ENCODE measurements at regions of chr6 and their contacts with region 1.

Region 1: GRCh38 chr6:26439657-26440056 is 647 bp upstream of the BTN3A3 start:
- DNase-seq: peak in 2 of 9 experiments; percentile 20 to 48
- ATAC-seq: no peak
- H3K4me3 ChIP-seq: peak overlapping the region; percentile 84 to 91
- H3K4me3 Mint-ChIP-seq: peak overlapping the region; percentile 100
- H3K27ac ChIP-seq: peak overlapping the region; percentile 95 to 98
- H3K27ac Mint-ChIP-seq: peak overlapping the region; percentile 100
- H3K4me1 ChIP-seq: peaks cover 23% of the 10 kb centered on the region
- H3K4me1 Mint-ChIP-seq: peaks cover 44% of the 10 kb centered on the region
- H3K27me3 ChIP-seq: no peaks in the 10 kb centered on the region
- H3K27me3 Mint-ChIP-seq: no peaks in the 10 kb centered on the region
- CTCF ChIP-seq: no peak

Region 2: GRCh38 chr6:26401987-26402658 is 37.5 kb before region 1 on chr6 and contains the start of gene BTN3A1:
- CTCF ChIA-PET with region 1: interaction called, 3 read pairs
- POLR2A ChIA-PET with region 1: no interaction called
- intact Hi-C with region 1: loop called in 1 of 2 experiments (anchors 1 kb)
- DNase-seq: peak; percentile 22 to 90 (median 65)
- ATAC-seq: peak; percentile 88
- H3K4me3 ChIP-seq: peak within 1 kb of the TSS; percentile 82 to 91
- H3K4me3 Mint-ChIP-seq: peak within 1 kb of the TSS; percentile 92
- H3K27ac ChIP-seq: peak within 1 kb of the TSS; percentile 92 to 97
- H3K27ac Mint-ChIP-seq: peak within 1 kb of the TSS; percentile 99
- H3K4me1 ChIP-seq: peaks cover 42% of the 10 kb centered on the region
- H3K4me1 Mint-ChIP-seq: peaks cover 50% of the 10 kb centered on the region
- H3K27me3 ChIP-seq: no peaks in the 10 kb centered on the region
- H3K27me3 Mint-ChIP-seq: no peaks in the 10 kb centered on the region
- CTCF ChIP-seq: no peak
- total RNA-seq, gene BTN3A1: 97.0 to 104 TPM

Region 3: GRCh38 chr6:26457806-26458688 is 18.4 kb after region 1 on chr6 and contains the start of gene BTN2A1:
- CTCF ChIA-PET with region 1: interaction called, 5 read pairs
- POLR2A ChIA-PET with region 1: interaction called, 4 read pairs
- intact Hi-C with region 1: loop called in 1 of 2 experiments (anchors 2 kb)
- DNase-seq: peak; percentile 33 to 93 (median 65)
- ATAC-seq: peak; percentile 96
- H3K4me3 ChIP-seq: peak within 1 kb of the TSS; percentile 64 to 78
- H3K4me3 Mint-ChIP-seq: peak within 1 kb of the TSS; percentile 100
- H3K27ac ChIP-seq: peak within 1 kb of the TSS; percentile 61 to 92
- H3K27ac Mint-ChIP-seq: peak within 1 kb of the TSS; percentile 99
- H3K4me1 ChIP-seq: peaks cover 48% of the 10 kb centered on the region
- H3K4me1 Mint-ChIP-seq: peaks cover 68% of the 10 kb centered on the region
- H3K27me3 ChIP-seq: no peaks in the 10 kb centered on the region
- H3K27me3 Mint-ChIP-seq: no peaks in the 10 kb centered on the region
- CTCF ChIP-seq: no peak
- total RNA-seq, gene BTN2A1: 16.4 to 17.3 TPM

Region 4: DNA sequence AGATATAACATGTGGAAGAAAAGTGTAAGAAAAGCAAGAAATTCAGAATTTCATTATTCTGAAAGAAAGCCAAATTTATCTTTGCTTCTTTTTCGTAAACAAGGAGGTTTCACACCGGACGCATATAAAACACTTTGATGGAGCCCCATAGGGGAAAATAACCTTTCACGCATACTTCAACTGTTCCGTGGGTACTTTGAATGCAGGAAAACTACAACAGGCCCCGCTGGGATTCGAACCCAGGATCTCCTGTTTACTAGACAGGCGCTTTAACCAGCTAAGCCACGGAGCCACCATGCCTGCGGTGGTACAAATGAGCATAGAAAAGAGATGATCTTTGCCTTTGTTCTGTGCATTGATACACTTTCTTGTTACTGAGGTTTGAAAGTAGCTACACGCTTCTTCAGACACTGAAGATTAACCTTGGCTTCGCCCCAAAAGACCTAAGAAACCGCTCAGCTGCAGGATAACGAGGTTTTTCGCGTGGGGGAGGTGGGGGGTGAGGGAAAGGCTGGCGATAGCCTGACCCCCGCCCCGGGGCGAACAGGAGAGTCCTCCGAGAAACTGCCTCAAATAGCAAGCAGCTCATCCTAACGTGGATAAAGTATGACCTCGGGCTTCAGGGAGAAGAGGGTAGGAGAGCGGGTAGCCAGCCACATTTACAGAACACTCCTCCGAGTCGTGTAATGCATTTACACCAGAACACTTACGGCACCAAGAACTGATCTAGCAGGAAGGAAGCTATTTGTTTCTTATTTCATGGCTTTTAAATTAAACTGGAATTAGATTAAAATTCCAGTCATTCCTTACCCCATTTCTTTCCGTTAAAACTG is 93.3 kb after region 1 on chr6:
- CTCF ChIA-PET with region 1: no interaction called
- POLR2A ChIA-PET with region 1: no interaction called
- intact Hi-C with region 1: loop called in 1 of 2 experiments (anchors 1 kb)
- DNase-seq: peak; percentile 82 to 97 (median 91)
- ATAC-seq: peak; percentile 35
- H3K4me3 ChIP-seq: peak overlapping the region; percentile 69 to 80
- H3K4me3 Mint-ChIP-seq: peak overlapping the region; percentile 100
- H3K27ac ChIP-seq: peak overlapping the region; percentile 53 to 57
- H3K27ac Mint-ChIP-seq: peak overlapping the region; percentile 97
- H3K4me1 ChIP-seq: peaks cover 25% of the 10 kb centered on the region
- H3K4me1 Mint-ChIP-seq: peaks cover 52% of the 10 kb centered on the region
- H3K27me3 ChIP-seq: no peaks in the 10 kb centered on the region
- H3K27me3 Mint-ChIP-seq: peaks cover 2% of the 10 kb centered on the region
- CTCF ChIP-seq: no peak